ENCODE measurements at regions of chr19 and their contacts with region 1.

Region 1: GRCh38 chr19:7903244-7904073 is at the start of gene MAP2K7:
- DNase-seq: peak; percentile 100
- ATAC-seq: peak; percentile 83
- H3K4me3 ChIP-seq: peak within 1 kb of the TSS; percentile 77
- H3K27ac ChIP-seq: peak within 1 kb of the TSS; percentile 65
- H3K4me1 ChIP-seq: peaks cover 20% of the 10 kb centered on the region
- H3K27me3 ChIP-seq: no peaks in the 10 kb centered on the region
- CTCF ChIP-seq: peak; percentile 82
- total RNA-seq, gene MAP2K7: 39.3 and 40.5 TPM in 2 replicates

Region 2: DNA sequence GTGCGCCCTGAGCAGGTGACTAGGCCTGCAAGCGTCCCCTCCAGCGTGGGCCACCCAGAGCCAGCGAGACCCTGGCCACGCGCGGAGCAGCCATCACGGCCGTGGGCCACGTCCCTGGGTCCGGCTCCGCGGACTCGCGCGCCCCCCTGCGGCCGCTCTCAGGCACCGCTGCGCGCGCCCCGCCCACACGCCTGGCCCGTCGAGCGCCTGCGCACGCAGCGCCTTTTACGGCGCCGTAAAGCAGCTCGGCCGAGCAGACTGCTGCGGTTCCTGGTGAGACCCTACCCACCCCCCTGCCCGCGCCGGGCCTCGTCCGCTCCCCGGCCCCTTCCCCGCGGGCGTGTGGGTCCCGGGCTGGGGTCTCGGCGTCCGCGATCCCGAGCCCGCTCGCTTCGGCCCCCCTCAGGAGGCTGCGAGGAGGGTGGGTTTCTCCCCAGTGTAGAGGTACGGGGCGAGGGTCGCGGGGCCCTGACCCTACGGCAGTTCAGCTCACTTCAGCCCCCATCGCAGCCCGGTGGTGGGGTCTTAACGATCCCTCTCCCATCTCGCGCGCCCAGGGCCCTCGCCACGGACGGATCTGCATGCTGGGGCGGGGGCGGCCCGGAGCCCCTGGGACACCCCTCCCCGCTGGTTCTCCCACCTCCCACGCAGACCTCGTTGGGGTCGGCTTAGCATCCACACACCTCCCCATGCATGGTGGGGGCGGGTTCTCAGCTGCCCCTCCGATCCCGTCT is 222.7 kb before region 1 on chr19 and contains the start of gene TRAPPC5:
- CTCF ChIA-PET with region 1: no interaction called
- POLR2A ChIA-PET with region 1: interaction called, 11 read pairs
- intact Hi-C with region 1: no loop called
- DNase-seq: peak; percentile 93
- ATAC-seq: peak; percentile 81
- H3K4me3 ChIP-seq: peak within 1 kb of the TSS; percentile 97
- H3K27ac ChIP-seq: peak within 1 kb of the TSS; percentile 23; the same call in 1 of the 2 replicates
- H3K4me1 ChIP-seq: peaks cover 25% of the 10 kb centered on the region; the same call in 1 of the 2 replicates
- H3K27me3 ChIP-seq: no peaks in the 10 kb centered on the region
- CTCF ChIP-seq: peak; percentile 95
- total RNA-seq, gene TRAPPC5: 317 and 376 TPM in 2 replicates

Region 3: GRCh38 chr19:7762719-7763293 is 140.7 kb before region 1 on chr19 and contains the start of gene CLEC4M:
- CTCF ChIA-PET with region 1: no interaction called
- POLR2A ChIA-PET with region 1: no interaction called
- intact Hi-C with region 1: no loop called
- DNase-seq: no peak
- ATAC-seq: no peak
- H3K4me3 ChIP-seq: no peak within 1 kb of the TSS
- H3K27ac ChIP-seq: no peak within 1 kb of the TSS
- H3K4me1 ChIP-seq: no peaks in the 10 kb centered on the region
- H3K27me3 ChIP-seq: peaks cover 19% of the 10 kb centered on the region
- CTCF ChIP-seq: no peak
- total RNA-seq, gene CLEC4M: not detected in 2 replicates

Region 4: GRCh38 chr19:7852851-7853769 is 50.3 kb before region 1 on chr19:
- CTCF ChIA-PET with region 1: no interaction called
- POLR2A ChIA-PET with region 1: no interaction called
- intact Hi-C with region 1: loop called (anchors 1 kb)
- DNase-seq: peak; percentile 86
- ATAC-seq: peak; percentile 94
- H3K4me3 ChIP-seq: no peak overlapping the region
- H3K27ac ChIP-seq: no peak overlapping the region
- H3K4me1 ChIP-seq: peaks cover 4% of the 10 kb centered on the region
- H3K27me3 ChIP-seq: no peaks in the 10 kb centered on the region
- CTCF ChIP-seq: peak; percentile 94

Region 5: DNA sequence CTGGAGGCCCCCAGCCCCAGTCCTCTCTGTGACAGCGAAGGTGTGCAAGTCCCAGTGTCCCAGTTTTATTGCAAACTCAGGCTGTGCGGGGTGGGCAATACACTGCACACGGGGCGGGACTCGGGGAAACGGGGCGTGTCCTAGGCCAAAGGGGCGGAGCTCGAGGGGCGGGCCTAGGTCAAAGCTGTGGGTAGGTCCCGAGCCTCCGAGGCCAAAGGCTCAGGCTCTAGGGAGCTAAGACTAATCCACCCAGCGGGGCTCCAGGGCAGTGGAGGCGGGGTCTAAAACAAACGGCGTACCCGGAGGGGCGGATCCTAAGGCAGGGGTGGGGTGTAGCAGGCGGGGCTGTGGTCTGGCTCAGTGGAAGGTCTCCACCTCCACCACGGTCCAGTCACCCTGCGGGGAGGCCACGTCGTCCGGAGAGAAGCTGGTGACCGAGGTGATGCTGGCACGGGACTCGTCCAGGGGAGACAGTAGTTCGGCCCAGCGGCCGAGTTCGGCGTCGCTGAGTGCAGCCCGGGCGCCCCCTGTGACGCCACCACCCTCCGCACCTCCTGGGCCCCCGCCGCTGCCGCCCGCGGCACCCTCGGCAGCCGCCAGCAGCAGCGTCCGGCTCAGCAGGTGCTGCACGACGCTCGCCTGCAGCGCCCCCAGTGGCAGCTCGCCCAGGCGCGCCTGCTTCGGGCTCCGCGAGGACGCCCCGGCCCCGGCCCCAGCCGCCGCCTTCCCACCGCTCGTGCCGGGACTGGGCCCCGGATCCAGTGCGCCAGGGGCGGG is 34.6 kb before region 1 on chr19:
- CTCF ChIA-PET with region 1: interaction called, 23 read pairs
- POLR2A ChIA-PET with region 1: interaction called, 16 read pairs
- intact Hi-C with region 1: loop called (anchors 1 kb)
- DNase-seq: peak; percentile 95
- ATAC-seq: peak; percentile 52
- H3K4me3 ChIP-seq: peak overlapping the region; percentile 72
- H3K27ac ChIP-seq: peak overlapping the region; percentile 12; the same call in 1 of the 2 replicates
- H3K4me1 ChIP-seq: peaks cover 24% of the 10 kb centered on the region
- H3K27me3 ChIP-seq: no peaks in the 10 kb centered on the region
- CTCF ChIP-seq: peak; percentile 82

Region 6: GRCh38 chr19:7888145-7888825 is 15.2 kb before region 1 on chr19 and contains the start of gene LRRC8E:
- CTCF ChIA-PET with region 1: no interaction called
- POLR2A ChIA-PET with region 1: interaction called, 4 read pairs
- intact Hi-C with region 1: loop called (anchors 2 kb)
- DNase-seq: peak; percentile 87
- ATAC-seq: peak; percentile 95
- H3K4me3 ChIP-seq: peak within 1 kb of the TSS; percentile 90
- H3K27ac ChIP-seq: peak within 1 kb of the TSS; percentile 7; the same call in 1 of the 2 replicates
- H3K4me1 ChIP-seq: peaks cover 14% of the 10 kb centered on the region
- H3K27me3 ChIP-seq: no peaks in the 10 kb centered on the region
- CTCF ChIP-seq: no peak
- total RNA-seq, gene LRRC8E: 30.8 and 35.3 TPM in 2 replicates

Region 7: GRCh38 chr19:8526345-8527067 is 623.0 kb after region 1 on chr19:
- CTCF ChIA-PET with region 1: no interaction called
- POLR2A ChIA-PET with region 1: no interaction called
- intact Hi-C with region 1: loop called (anchors 5 kb)
- DNase-seq: peak; percentile 95
- ATAC-seq: peak; percentile 67
- H3K4me3 ChIP-seq: peak overlapping the region; percentile 85
- H3K27ac ChIP-seq: peak overlapping the region; percentile 63
- H3K4me1 ChIP-seq: peaks cover 10% of the 10 kb centered on the region
- H3K27me3 ChIP-seq: no peaks in the 10 kb centered on the region
- CTCF ChIP-seq: no peak